Activated CD8-positive, alpha-beta T cell treated with anti-CD3 and anti-CD28 coated beads for 36 hours (primary cell): ENCODE measurements at regions of chr19 and their contacts with region 1.

Region 1: DNA sequence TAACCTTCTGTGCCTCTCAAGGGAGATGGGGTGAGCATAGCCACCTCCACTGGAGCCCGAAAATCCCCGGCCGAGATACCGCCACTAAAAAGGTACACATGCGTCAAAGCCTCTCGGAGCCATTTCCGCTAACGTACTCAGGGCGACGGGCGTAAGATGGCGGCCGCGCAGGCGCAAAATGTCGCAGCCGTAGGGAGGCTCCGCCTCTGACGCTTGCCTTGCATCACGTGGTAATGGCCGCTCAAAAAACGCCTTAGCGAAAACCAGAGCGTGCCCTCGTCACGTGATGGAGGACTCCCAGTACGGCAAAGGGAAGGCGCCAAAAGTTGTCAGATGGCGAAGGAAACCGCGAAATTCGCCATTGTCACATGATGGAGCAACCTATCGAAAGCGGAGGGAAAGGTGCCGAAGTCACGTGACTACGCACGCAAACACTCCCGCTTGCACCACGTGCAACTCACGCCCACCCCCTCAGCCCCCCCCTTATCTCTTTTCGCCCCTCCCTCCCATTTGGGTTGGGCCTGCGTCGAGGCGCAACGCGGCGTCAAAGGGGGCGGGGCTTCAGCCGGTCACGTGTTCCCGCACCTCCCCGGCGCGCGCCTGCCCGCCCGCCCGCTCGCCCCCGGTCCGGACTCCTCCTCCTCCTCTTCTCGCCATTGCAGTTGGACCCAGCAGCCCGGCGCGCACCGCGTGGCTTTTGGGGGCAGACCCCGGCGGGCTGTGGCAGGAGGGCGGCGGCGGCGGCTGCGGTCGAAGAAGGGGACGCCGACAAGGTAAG is at the start of gene ILF3:
- DNase-seq: peak; percentile 100
- ATAC-seq: peak; percentile 84
- H3K4me3 Mint-ChIP-seq: peak within 1 kb of the TSS; percentile 87
- H3K27ac Mint-ChIP-seq: peak within 1 kb of the TSS; percentile 98
- H3K4me1 Mint-ChIP-seq: peaks cover 28% of the 10 kb centered on the region
- H3K27me3 Mint-ChIP-seq: peaks cover 1% of the 10 kb centered on the region
- CTCF ChIP-seq: no peak
- total RNA-seq, gene ILF3: 435 to 450 TPM

Region 2: GRCh38 chr19:10631874-10632273 is 22.0 kb before region 1 on chr19:
- CTCF ChIA-PET with region 1: no interaction called
- POLR2A ChIA-PET with region 1: no interaction called
- intact Hi-C with region 1: no loop called
- DNase-seq: no peak
- ATAC-seq: no peak
- H3K4me3 Mint-ChIP-seq: no peak overlapping the region
- H3K27ac Mint-ChIP-seq: no peak overlapping the region
- H3K4me1 Mint-ChIP-seq: no peaks in the 10 kb centered on the region
- H3K27me3 Mint-ChIP-seq: no peaks in the 10 kb centered on the region
- CTCF ChIP-seq: no peak

Region 3: DNA sequence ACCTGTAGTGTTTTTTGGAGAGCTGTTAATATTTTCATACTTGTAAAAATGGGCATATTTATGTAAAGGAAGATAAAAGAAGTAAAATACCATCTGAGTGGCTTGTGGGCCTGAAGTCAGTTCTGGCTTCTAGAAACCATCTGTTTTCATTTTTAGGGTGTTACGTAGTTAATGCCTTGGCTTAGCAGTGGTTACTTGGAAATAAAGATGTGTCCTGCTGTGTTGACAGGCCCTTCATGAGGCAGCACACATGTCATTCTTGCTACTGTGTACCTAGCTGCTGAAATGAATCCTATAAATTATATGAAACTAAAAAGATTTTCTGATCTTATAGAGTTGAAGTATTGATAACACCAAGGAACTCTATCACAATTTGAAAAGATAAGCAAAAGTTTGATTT is 16.3 kb after region 1 on chr19:
- CTCF ChIA-PET with region 1: no interaction called
- POLR2A ChIA-PET with region 1: interaction called, 36 read pairs
- intact Hi-C with region 1: no loop called
- DNase-seq: no peak
- ATAC-seq: no peak
- H3K4me3 Mint-ChIP-seq: no peak overlapping the region
- H3K27ac Mint-ChIP-seq: no peak overlapping the region
- H3K4me1 Mint-ChIP-seq: peaks cover 33% of the 10 kb centered on the region
- H3K27me3 Mint-ChIP-seq: no peaks in the 10 kb centered on the region
- CTCF ChIP-seq: no peak

Region 4: DNA sequence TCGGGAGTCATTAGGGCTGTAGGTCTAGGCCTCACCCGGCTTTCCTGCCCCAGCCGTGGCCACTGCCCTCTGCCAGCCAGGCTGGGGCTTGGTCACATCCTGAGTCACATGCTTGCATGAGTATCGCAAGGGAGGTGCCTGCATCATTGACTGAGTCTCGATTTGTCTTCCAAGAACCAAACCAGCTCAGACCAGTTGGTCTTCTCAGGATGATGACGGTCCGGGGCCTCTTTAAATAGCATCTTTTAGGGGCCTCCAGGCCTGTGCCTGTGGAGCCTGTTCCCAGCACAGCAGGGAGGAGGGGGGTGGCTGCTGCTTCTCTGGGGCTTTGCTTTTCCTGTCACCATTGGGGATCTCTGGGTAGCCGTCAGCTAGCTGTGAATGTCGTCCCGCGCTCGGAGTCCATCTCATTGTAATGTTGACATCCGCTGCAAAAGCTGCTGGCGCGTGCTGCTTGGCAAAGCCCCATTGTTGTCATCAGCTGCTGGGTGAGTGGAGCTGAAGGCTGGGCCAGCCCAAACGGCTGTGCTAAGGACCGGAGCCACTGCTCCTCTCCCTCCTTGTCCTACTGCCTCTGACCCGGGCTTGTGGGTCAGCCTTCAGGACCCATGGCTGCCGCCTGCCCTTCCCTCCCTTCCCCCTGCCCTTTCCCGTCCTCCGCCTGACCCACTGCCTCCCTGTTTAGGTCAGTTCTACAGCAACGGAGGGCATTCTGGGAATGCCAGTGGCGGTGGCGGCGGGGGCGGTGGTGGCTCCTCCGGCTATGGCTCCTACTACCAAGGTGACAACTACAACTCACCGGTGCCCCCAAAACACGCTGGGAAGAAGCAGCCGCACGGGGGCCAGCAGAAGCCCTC is 33.0 kb after region 1 on chr19:
- CTCF ChIA-PET with region 1: no interaction called
- POLR2A ChIA-PET with region 1: interaction called, 12 read pairs
- intact Hi-C with region 1: no loop called
- DNase-seq: no peak
- ATAC-seq: no peak
- H3K4me3 Mint-ChIP-seq: no peak overlapping the region
- H3K27ac Mint-ChIP-seq: no peak overlapping the region
- H3K4me1 Mint-ChIP-seq: no peaks in the 10 kb centered on the region
- H3K27me3 Mint-ChIP-seq: no peaks in the 10 kb centered on the region
- CTCF ChIP-seq: no peak